ENCODE measurements at regions of chr2 and their contacts with region 1.

Region 1: GRCh38 chr2:101341901-101342624 is 33.6 kb upstream of the RNF149 start:
- DNase-seq: peak; percentile 52
- ATAC-seq: peak; percentile 90
- H3K4me3 ChIP-seq: no peak overlapping the region
- H3K27ac ChIP-seq: no peak overlapping the region
- H3K4me1 ChIP-seq: peaks cover 3 to 10% of the 10 kb centered on the region in 2 experiments; a peak in 2 of 4 replicates
- H3K27me3 ChIP-seq: no peaks in the 10 kb centered on the region
- CTCF ChIP-seq: peak; percentile 83 to 86 (median 85)
- POLR2A ChIP-seq: no peak
- RAD21 ChIP-seq: peak; percentile 95

Region 2: DNA sequence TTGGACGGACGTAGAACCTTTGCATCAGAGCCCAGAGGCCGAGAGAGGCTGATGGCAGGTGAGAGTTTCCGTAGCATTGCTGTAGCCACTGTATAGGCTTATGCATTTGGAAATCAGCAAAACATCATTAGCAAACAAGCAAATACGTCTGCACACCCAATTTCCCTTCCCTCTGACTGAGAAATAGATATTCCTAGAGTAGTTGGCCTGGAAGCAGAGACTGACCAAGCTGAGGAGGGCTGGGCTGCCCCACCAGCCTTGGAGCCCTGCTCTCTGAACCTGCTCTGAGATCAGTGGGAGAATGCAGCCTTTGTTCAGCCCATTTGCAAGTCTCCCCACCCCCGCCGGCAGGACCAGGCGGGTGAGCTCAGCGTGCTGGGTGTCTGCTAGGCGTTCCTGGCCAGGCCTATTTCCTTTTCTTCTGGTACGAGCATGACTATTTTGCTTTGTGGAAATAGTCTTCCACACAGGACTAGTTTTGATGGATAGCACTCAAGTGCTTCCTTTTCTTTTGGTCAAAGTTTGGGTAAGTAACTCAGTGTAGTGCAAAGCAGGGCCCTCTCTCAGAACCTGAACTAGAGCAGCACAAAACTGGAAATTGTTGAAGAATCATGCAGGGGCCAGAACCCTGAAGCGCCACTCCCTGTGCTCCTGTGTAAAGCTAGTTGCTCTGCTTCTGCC is 11.7 kb before region 1 on chr2:
- CTCF ChIA-PET with region 1: interaction called, 17 read pairs
- POLR2A ChIA-PET with region 1: no interaction called
- RAD21 ChIA-PET with region 1: no interaction called
- intact Hi-C with region 1: no loop called
- DNase-seq: no peak
- ATAC-seq: no peak
- H3K4me3 ChIP-seq: no peak overlapping the region
- H3K27ac ChIP-seq: no peak overlapping the region
- H3K4me1 ChIP-seq: peaks cover 11 to 18% of the 10 kb centered on the region in 2 experiments; a peak in 3 of 4 replicates
- H3K27me3 ChIP-seq: no peaks in the 10 kb centered on the region
- CTCF ChIP-seq: no peak
- POLR2A ChIP-seq: no peak
- RAD21 ChIP-seq: no peak

Region 3: GRCh38 chr2:101387151-101387807 is 45.2 kb after region 1 on chr2 and contains the start of gene CREG2:
- CTCF ChIA-PET with region 1: interaction called, 29 read pairs
- POLR2A ChIA-PET with region 1: no interaction called
- RAD21 ChIA-PET with region 1: interaction called, 3 to 5 read pairs
- intact Hi-C with region 1: loop called (anchors 1 kb)
- DNase-seq: peak; percentile 26
- ATAC-seq: peak; percentile 91
- H3K4me3 ChIP-seq: peak within 1 kb of the TSS; percentile 42 to 57
- H3K27ac ChIP-seq: no peak within 1 kb of the TSS
- H3K4me1 ChIP-seq: peaks cover 0 to 18% of the 10 kb centered on the region in 2 experiments; a peak in 2 of 4 replicates
- H3K27me3 ChIP-seq: 0 out of 2 replicates have a peak, but pooled peaks cover 5% of the 10 kb centered on the region
- CTCF ChIP-seq: peak; percentile 41 to 72 (median 57)
- POLR2A ChIP-seq: no peak
- RAD21 ChIP-seq: peak; percentile 49
- total RNA-seq, gene CREG2: 0.12 TPM

Region 4: DNA sequence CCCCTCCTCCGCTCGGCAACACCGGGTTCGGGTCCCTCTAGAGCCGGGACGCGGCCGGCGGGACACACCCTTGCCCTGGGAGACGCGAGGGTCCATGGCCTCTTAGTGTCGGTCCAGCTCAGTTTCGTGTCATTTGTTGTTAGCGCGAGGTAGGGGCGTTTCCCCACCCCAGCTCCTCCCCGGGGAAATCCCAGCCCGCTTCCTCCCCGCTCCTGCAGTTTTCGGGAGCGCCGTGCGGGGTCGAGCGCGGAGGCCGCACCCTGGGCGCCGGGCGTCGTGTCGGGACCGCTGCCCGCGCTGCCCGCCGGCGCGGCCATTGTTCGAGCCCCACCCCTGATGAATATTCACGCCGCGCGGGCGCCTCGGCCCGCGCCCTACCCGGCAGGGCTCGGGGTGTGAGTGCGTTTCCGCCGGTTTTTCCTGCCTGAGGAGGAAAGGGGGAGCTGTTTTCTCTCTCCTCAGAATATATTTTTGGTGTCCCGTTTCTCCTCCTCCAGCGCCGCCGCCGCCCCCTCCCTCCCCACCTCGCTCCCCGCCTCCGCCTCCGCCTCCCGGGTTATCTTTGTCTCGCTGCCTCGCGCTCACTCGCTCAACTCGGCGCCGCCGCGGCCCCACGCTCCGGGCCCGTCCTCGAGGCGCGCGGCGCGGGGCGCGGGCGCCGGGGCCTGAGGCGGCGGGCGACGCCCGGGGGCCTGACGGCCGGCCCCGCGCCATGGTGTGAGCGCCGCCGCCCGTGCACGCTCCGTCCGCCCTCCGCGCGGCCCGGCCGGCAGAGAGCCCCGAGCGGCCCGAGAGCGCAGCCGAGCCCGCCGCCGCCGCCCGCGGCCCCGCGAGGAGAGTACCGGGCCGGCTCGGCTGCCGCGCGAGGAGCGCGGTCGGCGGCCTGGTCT is 355.3 kb after region 1 on chr2 and contains the start of gene MAP4K4:
- CTCF ChIA-PET with region 1: no interaction called
- POLR2A ChIA-PET with region 1: interaction called, 3 read pairs
- RAD21 ChIA-PET with region 1: no interaction called
- intact Hi-C with region 1: loop called (anchors 5 kb)
- DNase-seq: peak; percentile 44
- ATAC-seq: peak; percentile 83
- H3K4me3 ChIP-seq: peak within 1 kb of the TSS; percentile 69 to 82
- H3K27ac ChIP-seq: peak within 1 kb of the TSS; percentile 89
- H3K4me1 ChIP-seq: peaks cover 8 to 23% of the 10 kb centered on the region in 2 experiments; a peak in 3 of 4 replicates
- H3K27me3 ChIP-seq: no peaks in the 10 kb centered on the region
- CTCF ChIP-seq: peak in 1 of 3 experiments; percentile 6; a peak in 1 of 6 replicates
- POLR2A ChIP-seq: no peak
- RAD21 ChIP-seq: peak; percentile 16
- total RNA-seq, gene MAP4K4: 62.3 TPM